HCT116 (cell line): ENCODE measurements at regions of chr12 and their contacts with region 1.

Region 1: DNA sequence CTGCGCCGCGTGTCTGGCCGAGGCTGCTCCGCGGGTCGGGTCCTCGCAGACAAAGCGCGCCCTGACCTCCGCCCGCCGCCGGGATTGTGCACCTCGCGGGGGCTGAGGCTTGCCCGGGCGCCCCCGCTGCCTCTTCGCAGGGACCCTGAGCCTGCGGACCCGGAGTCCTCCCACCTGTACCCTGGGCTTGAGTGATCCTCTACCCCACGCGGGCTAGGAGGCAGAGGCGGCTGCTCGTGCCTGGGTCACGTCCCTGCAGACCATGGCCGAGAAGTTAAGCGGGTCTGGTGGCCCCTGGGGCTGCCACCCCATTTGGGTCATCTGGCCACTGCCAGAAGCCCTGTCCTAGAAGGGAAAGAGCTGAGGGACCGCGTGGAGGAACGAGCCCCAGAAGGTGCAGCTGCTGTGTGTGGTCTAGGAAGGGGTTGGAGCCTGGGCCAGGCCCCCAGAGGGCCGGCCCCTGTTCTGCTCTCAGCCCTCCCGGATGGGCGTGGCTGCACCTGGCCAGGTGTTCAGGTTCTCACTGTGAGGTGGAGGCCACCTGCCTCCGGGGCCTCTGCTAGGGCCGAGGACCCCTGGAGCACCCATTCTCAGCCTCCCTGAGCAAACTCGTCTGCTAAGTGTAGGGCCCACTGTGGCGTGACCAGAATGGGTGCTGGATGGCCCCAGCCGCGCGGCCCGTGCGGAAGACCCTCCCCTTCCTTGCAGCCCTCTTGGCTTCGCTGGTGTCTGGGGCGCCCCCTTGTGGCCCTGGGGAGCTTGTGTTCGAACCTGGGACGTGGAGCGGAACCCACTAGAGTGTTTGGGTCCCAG is 49.6 kb downstream of the LRCOL1 start:
- DNase-seq: peak; percentile 75
- ATAC-seq: peak; percentile 80
- H3K4me3 ChIP-seq: peak overlapping the region; percentile 87 to 96
- H3K27ac ChIP-seq: peak overlapping the region; percentile 96
- H3K4me1 ChIP-seq: peaks cover 5 to 18% of the 10 kb centered on the region in 2 experiments; a peak in 2 of 4 replicates
- H3K27me3 ChIP-seq: no peaks in the 10 kb centered on the region
- CTCF ChIP-seq: peak; percentile 86 to 96 (median 95)
- POLR2A ChIP-seq: no peak
- RAD21 ChIP-seq: peak; percentile 65

Region 2: DNA sequence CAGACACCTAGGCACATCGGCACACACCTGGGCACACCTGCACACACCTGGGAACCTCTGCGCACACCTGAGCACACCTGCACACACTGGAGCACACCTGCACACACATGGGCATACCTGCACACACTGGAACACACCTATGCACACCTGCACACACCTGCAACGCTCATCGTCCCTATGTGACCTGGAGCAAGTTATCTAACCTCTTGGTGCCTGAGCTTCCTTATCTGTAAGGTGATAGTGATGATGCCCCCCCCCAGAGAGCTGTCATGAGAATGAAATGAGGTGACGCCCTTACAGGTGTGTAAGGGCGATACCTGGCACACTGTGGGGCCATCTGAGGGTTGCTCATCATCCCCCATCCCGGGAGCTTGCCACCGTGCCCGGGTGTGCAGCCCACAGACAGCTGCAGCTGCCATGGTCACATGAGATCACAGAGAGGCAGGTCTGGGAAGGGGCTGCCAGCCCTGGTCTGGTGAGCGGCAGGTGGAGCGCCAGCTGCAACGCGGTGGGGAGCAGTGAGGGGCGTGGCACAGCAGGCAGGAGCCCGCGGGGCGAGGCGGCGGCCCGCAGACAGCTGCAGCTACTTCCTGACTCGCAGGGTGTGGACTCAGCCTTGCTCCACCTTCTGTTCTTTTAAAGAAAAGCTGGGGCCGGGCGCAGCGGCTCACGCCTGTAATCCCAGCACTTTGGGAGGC is 130.7 kb before region 1 on chr12:
- CTCF ChIA-PET with region 1: interaction called, 7 read pairs
- POLR2A ChIA-PET with region 1: no interaction called
- RAD21 ChIA-PET with region 1: no interaction called
- intact Hi-C with region 1: loop called (anchors 1 kb)
- DNase-seq: peak; percentile 41
- ATAC-seq: peak; percentile 85
- H3K4me3 ChIP-seq: peak overlapping the region; percentile 28 to 52
- H3K27ac ChIP-seq: no peak overlapping the region; the same call in 1 of the 2 replicates
- H3K4me1 ChIP-seq: peaks cover 14 to 26% of the 10 kb centered on the region in 2 experiments
- H3K27me3 ChIP-seq: no peaks in the 10 kb centered on the region
- CTCF ChIP-seq: no peak
- POLR2A ChIP-seq: no peak
- RAD21 ChIP-seq: no peak

Region 3: DNA sequence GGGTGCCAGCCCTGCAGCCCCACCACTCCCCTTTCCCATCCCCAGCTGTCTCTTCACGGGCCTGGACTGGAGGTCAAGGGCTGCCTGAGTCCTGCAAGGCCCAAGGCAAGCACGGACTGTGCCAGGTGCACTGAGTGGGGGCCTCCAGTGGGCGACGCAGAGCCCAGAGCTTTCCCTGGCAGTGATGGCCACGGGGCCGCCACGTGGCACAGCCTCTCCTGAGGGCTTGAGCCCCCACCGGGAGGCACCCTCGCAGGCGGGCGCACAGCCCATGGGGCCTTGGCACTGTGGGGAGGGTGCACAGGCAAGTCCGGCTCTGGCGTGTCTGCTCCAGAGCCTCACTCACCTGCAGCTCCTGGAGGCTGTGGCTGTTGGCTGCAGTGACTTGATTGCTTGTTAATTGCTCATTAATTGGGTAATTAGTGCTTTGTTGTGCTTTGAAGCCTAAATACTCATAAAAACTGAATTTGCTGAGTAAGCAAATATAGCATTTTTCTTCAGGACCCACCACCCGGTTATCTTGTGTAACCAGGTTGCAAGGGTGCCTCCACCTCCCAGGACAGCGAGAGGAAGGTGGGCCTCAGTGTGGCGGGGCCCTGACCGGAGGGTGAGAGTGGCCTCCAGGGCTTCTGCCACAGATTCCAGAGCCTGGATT is 22.4 kb before region 1 on chr12:
- CTCF ChIA-PET with region 1: no interaction called
- POLR2A ChIA-PET with region 1: no interaction called
- RAD21 ChIA-PET with region 1: no interaction called
- intact Hi-C with region 1: no loop called
- DNase-seq: no peak
- ATAC-seq: no peak
- H3K4me3 ChIP-seq: no peak overlapping the region
- H3K27ac ChIP-seq: no peak overlapping the region
- H3K4me1 ChIP-seq: no peaks in the 10 kb centered on the region
- H3K27me3 ChIP-seq: no peaks in the 10 kb centered on the region
- CTCF ChIP-seq: no peak
- POLR2A ChIP-seq: no peak
- RAD21 ChIP-seq: no peak